CD14-positive monocyte (primary cell): ENCODE measurements at regions of chr5 and their contacts with region 1.

Region 1: DNA sequence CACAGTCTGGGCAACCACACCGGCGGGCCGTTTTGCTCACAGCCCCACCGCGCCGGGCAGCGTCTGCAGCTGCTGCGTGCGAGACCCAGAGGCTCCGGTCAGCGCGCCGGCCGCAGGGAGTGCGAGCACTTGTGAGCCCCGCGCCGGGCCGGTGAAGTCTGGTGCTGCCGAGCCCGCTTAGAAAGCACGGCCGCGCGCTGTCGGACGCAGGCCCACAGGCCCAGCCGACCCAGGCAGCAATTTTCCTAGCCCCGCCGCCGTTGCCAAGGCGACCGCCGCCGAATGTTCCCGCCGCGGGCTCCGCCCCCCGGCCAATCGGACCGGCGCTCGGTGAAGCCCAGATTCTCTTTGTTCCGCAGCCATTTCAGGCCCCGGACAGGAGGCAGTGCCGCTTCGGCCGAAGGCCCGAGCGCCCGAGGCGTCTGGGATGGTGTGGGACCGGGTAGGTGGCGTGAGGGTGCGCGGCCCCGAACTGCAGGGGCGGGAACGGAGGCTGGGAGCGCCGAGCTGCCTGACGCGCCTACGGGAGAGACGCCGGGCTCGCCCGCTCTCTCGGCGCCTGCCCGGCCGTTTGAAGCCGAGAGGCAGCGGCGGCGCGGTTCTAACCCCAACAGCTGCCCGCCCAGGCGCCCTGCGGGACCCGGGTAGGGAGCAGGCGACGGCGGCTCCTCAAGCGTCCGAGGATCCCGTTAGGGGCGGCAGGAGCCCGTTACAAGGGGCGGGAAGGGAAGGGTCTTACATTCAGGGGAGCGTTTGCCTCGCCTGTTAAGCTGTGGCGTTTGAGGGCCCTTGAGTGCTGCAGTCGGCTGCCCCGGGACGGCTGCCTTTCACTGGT is at the start of gene TNPO1:
- DNase-seq: peak; percentile 81
- H3K4me3 ChIP-seq: peak within 1 kb of the TSS; percentile 61 to 76 (median 74)
- H3K4me3 Mint-ChIP-seq: peak within 1 kb of the TSS; percentile 93 to 97
- H3K27ac ChIP-seq: peak within 1 kb of the TSS; percentile 85 to 87
- H3K27ac Mint-ChIP-seq: peak within 1 kb of the TSS; percentile 90 to 94 (median 92)
- H3K4me1 ChIP-seq: peaks cover 15 to 39% of the 10 kb centered on the region in 2 donors
- H3K4me1 Mint-ChIP-seq: peaks cover 29% of the 10 kb centered on the region
- H3K27me3 ChIP-seq: no peaks in the 10 kb centered on the region
- H3K27me3 Mint-ChIP-seq: no peaks in the 10 kb centered on the region
- CTCF ChIP-seq: no peak
- polyA plus RNA-seq, gene TNPO1: 9.3 to 28.1 (median 26.3) TPM

Region 2: DNA sequence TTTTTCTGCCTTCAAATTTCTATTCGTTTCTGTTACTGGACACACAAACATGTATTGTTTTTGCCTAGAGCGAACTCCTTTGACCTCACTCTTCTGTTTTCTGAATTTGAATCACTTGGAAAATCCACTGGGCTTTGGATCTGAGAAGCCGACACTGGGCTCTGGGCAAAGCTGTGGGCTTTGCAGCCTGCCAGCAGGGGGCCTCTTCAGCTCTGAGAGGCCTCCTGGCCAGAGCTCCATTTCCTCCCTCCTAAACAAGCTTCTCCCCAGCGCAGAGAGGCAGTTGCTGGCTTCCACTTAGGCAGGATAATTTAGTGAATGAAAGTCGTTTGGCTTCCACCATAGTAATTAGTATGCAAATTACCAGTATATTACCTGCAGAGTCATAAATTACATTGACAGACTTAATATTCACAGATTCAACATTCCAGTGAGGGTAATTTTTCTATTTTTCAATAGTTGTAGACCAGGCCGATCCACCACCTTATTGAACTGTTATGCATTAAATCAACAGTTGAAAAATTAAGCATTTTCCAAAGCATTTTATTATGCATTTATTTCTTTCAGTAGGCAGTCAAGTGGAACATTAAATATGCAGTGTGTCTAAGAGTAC is 205.3 kb before region 1 on chr5:
- intact Hi-C with region 1: loop called (anchors 10 kb)
- DNase-seq: peak; percentile 44 to 68 (median 66)
- H3K4me3 ChIP-seq: no peak overlapping the region
- H3K4me3 Mint-ChIP-seq: no peak overlapping the region
- H3K27ac ChIP-seq: no peak overlapping the region
- H3K27ac Mint-ChIP-seq: no peak overlapping the region
- H3K4me1 ChIP-seq: no peaks in the 10 kb centered on the region
- H3K4me1 Mint-ChIP-seq: peaks cover 4% of the 10 kb centered on the region
- H3K27me3 ChIP-seq: no peaks in the 10 kb centered on the region
- H3K27me3 Mint-ChIP-seq: peaks cover 0 to 6% (median 3%) of the 10 kb centered on the region in 3 donors
- CTCF ChIP-seq: peak; percentile 94

Region 3: GRCh38 chr5:72860499-72860898 is 44.0 kb after region 1 on chr5:
- intact Hi-C with region 1: no loop called
- DNase-seq: no peak
- H3K4me3 ChIP-seq: no peak overlapping the region
- H3K4me3 Mint-ChIP-seq: no peak overlapping the region
- H3K27ac ChIP-seq: no peak overlapping the region
- H3K27ac Mint-ChIP-seq: peak overlapping the region in 1 of 7 donors; percentile 66
- H3K4me1 ChIP-seq: no peaks in the 10 kb centered on the region
- H3K4me1 Mint-ChIP-seq: no peaks in the 10 kb centered on the region
- H3K27me3 ChIP-seq: no peaks in the 10 kb centered on the region
- H3K27me3 Mint-ChIP-seq: peaks cover 0 to 1% (median 0%) of the 10 kb centered on the region in 3 donors
- CTCF ChIP-seq: no peak

Region 4: GRCh38 chr5:72955768-72956323 is 139.3 kb after region 1 on chr5 and contains the start of gene FCHO2:
- intact Hi-C with region 1: loop called in 1 of 2 experiments (anchors 5 kb)
- DNase-seq: peak; percentile 93 to 96 (median 94)
- H3K4me3 ChIP-seq: peak within 1 kb of the TSS; percentile 54 to 86 (median 84)
- H3K4me3 Mint-ChIP-seq: peak within 1 kb of the TSS; percentile 96 to 97
- H3K27ac ChIP-seq: peak within 1 kb of the TSS; percentile 79 to 90
- H3K27ac Mint-ChIP-seq: peak within 1 kb of the TSS; percentile 86 to 98 (median 91)
- H3K4me1 ChIP-seq: peaks cover 30 to 47% of the 10 kb centered on the region in 2 donors
- H3K4me1 Mint-ChIP-seq: peaks cover 37% of the 10 kb centered on the region
- H3K27me3 ChIP-seq: peaks cover 0 to 35% of the 10 kb centered on the region in 2 donors
- H3K27me3 Mint-ChIP-seq: peaks cover 10 to 17% (median 13%) of the 10 kb centered on the region in 3 donors
- CTCF ChIP-seq: peak; percentile 76
- polyA plus RNA-seq, gene FCHO2: 8.3 to 10.1 (median 9.9) TPM

Region 5: GRCh38 chr5:73498057-73499008 is 681.8 kb after region 1 on chr5 and contains the start of gene BTF3:
- intact Hi-C with region 1: loop called in 1 of 2 experiments (anchors 10 kb)
- DNase-seq: peak; percentile 94 to 96 (median 96)
- H3K4me3 ChIP-seq: peak within 1 kb of the TSS; percentile 47 to 87 (median 86)
- H3K4me3 Mint-ChIP-seq: peak within 1 kb of the TSS; percentile 89 to 96
- H3K27ac ChIP-seq: peak within 1 kb of the TSS; percentile 77 to 99
- H3K27ac Mint-ChIP-seq: peak within 1 kb of the TSS; percentile 92 to 99 (median 98)
- H3K4me1 ChIP-seq: peaks cover 14 to 27% of the 10 kb centered on the region in 2 donors
- H3K4me1 Mint-ChIP-seq: peaks cover 26% of the 10 kb centered on the region
- H3K27me3 ChIP-seq: peaks cover 2 to 9% of the 10 kb centered on the region in 2 donors
- H3K27me3 Mint-ChIP-seq: peaks cover 4 to 7% (median 5%) of the 10 kb centered on the region in 3 donors
- CTCF ChIP-seq: no peak
- polyA plus RNA-seq, gene BTF3: 486 to 559 (median 512) TPM